Lower lobe of right lung (tissue), 2 donors: ENCODE measurements at regions of chr12 and their contacts with region 1.

Region 1: GRCh38 chr12:22631863-22632463 is 7.0 kb downstream of the ETNK1 start:
- DNase-seq: no peak
- ATAC-seq: peak in 1 of 2 donors; percentile 57
- H3K4me3 ChIP-seq: no peak overlapping the region
- H3K27ac ChIP-seq: no peak overlapping the region
- H3K4me1 ChIP-seq: peaks cover 47% of the 10 kb centered on the region
- H3K27me3 ChIP-seq: no peaks in the 10 kb centered on the region
- CTCF ChIP-seq: peak; percentile 57

Region 2: GRCh38 chr12:22539055-22539454 is 92.9 kb before region 1 on chr12:
- intact Hi-C with region 1: loop called (anchors 5 kb)
- DNase-seq: no peak
- ATAC-seq: peak; percentile 34 to 67
- H3K4me3 ChIP-seq: no peak overlapping the region
- H3K27ac ChIP-seq: peak overlapping the region; percentile 19
- H3K4me1 ChIP-seq: peaks cover 51% of the 10 kb centered on the region
- H3K27me3 ChIP-seq: no peaks in the 10 kb centered on the region
- CTCF ChIP-seq: no peak

Region 3: DNA sequence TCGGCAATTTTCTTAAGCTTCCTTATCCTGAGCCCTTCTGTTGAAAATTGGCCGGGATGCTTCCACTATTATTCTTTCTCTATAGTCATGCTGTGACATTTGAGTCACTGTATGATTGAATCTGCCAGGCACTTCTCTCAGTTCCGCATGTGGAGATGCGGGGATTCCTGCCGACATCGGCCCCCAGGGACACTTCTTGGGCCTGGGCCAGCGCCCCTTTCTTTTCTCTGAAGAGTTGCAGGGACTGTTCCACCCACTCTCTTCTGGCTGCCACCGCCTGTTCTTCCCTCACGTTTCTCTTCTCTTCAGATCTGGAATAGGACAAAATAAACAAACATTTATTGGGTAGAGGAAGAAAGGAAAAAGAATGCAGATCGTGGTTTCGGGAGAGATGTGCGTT is 303.1 kb after region 1 on chr12:
- intact Hi-C with region 1: no loop called
- DNase-seq: no peak
- ATAC-seq: no peak
- H3K4me3 ChIP-seq: no peak overlapping the region
- H3K27ac ChIP-seq: no peak overlapping the region
- H3K4me1 ChIP-seq: no peaks in the 10 kb centered on the region
- H3K27me3 ChIP-seq: no peaks in the 10 kb centered on the region
- CTCF ChIP-seq: no peak